Activated T-helper 1 cell treated with anti-CD3 and anti-CD28 coated beads, Interleukin-12 subunit alpha, Interleukin-12 subunit beta, Interleukin-2, Interleukin-4 antibody, amounts not matched to agents 30 ng/mL and 10 ng/mL and 1 ng/mL, durations not matched to agents 14 hours and 24 hours and 36 hours (primary cell): ENCODE measurements at regions of chr1 and their contacts with region 1.

Region 1: DNA sequence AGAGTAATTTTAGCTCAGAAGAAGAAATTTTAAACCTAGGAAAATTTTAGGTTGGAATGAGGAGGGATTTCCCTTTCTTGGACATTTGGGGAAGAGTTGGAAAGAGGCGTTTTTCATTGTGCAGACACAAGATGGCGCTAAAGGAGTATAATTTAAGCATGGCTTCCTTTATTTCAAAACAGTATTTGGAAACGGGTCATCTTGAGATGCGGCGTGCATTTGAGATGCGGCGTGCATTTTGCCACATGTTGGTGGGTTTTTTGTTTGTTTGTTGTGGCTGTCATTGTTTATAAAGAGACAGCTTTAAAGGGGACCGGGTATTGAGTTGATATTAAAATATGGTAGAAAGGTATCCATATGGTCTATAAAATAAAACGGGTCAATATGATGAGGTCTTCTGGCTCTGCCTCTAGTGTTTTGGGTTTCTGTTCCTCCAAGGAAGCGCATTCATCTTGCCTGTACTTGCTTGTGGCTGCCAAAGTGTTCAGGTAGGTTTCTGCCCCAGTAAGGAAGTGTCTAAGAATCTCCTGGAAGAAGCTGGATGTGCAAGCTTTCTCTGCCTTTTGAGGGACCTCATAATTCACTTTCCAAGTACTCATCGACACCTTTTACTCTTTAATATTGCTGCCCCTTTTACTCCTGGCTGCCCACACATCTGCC is 210.3 kb downstream of the SLC35F3 start:
- DNase-seq: no peak
- H3K4me3 Mint-ChIP-seq: peak overlapping the region; percentile 41
- H3K27ac Mint-ChIP-seq: no peak overlapping the region
- H3K4me1 Mint-ChIP-seq: peaks cover 8% of the 10 kb centered on the region
- H3K27me3 Mint-ChIP-seq: peaks cover 27% of the 10 kb centered on the region

Region 2: GRCh38 chr1:232589812-232590743 is 1524.7 kb before region 1 on chr1:
- intact Hi-C with region 1: no loop called
- DNase-seq: no peak
- H3K4me3 Mint-ChIP-seq: no peak overlapping the region
- H3K27ac Mint-ChIP-seq: peak overlapping the region; percentile 27
- H3K4me1 Mint-ChIP-seq: peaks cover 54% of the 10 kb centered on the region
- H3K27me3 Mint-ChIP-seq: no peaks in the 10 kb centered on the region

Region 3: DNA sequence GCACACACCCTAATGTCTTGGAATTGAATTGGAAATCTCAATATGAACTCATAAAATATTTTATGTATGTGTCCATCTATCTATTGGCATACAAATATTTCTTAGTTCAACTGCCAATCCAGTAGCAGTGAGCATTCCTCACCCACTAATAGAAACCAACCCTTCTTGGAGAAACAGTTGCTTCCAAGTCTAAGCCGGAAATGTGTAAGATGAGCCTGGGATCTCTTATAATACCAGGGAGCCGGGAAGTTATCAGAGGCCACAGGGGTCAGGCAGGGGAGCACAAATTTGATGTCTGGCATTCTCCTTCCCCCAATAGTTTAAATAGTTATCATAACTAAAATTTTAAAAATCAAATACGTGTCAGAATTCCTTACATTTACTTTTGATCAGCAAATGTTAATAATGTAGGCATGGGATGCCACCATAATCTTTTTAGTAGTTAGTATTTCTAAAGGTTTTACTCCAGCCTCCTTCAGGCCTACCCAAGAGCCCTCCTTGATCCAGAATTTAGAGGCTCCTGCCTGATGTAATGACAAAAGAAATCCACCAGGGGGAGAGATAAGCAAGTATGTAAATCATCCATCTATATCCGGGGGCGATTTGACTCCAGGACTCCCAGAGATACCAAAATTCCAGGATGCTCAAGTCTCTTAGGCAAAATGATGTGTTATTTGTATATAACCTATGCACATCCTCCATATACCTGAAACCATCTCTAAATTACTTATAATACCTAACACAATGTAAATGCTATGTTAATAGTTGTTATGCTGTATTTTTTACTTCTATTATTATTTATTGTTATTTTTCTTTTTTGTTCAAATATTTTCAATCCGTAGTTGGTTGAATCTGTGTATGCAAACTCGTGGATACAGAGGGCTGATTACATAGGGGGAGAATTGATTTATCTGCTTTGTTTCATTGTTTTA is 39.8 kb after region 1 on chr1:
- intact Hi-C with region 1: loop called (anchors 2 kb)
- DNase-seq: no peak
- H3K4me3 Mint-ChIP-seq: no peak overlapping the region
- H3K27ac Mint-ChIP-seq: no peak overlapping the region
- H3K4me1 Mint-ChIP-seq: no peaks in the 10 kb centered on the region
- H3K27me3 Mint-ChIP-seq: peaks cover 13% of the 10 kb centered on the region

Region 4: DNA sequence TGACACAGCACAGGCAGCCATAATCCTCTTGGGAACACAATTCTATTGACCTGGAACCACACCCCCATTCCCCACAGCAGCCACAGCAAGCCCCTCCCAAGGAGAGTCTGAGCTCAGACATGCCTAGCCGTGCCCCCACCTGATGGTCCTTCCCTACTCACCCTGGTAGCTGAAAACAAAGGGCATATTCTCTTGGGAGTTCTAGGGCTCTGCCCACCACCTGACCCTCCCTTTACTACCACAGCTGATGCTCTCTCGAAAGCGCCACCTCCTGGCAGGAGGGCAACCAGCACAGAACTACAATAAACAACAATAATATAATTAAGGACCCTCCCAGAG is 73.6 kb after region 1 on chr1:
- intact Hi-C with region 1: loop called (anchors 1 kb)
- DNase-seq: no peak
- H3K4me3 Mint-ChIP-seq: no peak overlapping the region
- H3K27ac Mint-ChIP-seq: no peak overlapping the region
- H3K4me1 Mint-ChIP-seq: no peaks in the 10 kb centered on the region
- H3K27me3 Mint-ChIP-seq: peaks cover 37% of the 10 kb centered on the region

Region 5: DNA sequence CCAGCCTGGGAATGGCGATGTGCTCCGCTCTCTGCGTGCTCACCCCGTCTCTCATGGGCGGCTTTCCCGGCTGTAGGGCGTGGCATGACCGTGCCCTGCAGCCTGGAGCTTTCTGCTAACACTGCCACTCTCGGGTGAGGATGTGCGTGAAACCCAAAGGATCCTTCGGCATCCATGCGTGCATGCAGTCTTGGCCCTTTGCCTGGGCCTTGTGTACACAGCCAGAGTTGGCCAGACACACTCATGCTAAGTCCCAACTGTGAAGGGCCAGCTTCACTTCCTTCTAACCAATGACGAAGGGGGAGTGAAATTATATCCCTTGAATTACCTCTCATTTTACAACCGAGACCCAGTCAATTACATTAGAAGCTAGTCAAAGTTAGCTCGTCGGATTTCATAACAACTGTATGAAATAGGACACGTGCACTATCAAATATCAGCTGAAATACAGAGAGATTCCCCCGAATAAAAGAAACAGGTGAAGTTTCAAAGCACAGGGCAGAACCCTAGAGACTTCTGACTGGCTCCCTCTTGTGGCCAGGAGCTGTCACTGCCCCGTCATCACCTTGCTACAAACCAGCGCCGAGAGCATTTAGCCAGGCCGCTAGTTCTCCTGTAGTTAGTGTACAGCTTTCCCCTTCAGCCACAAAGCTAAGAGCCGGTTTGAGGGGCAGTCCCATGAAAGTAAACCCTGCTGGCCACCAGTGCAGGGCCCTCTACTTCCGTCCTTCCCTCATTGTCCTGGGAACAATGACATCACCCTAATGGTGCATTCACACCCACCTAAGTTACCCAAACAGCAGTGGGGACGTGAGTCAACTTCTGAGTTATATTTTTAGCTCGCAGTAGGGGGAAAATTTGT is 195.1 kb after region 1 on chr1:
- intact Hi-C with region 1: loop called (anchors 1 kb)
- DNase-seq: peak; percentile 47
- H3K4me3 Mint-ChIP-seq: no peak overlapping the region
- H3K27ac Mint-ChIP-seq: peak overlapping the region; percentile 5
- H3K4me1 Mint-ChIP-seq: peaks cover 14% of the 10 kb centered on the region
- H3K27me3 Mint-ChIP-seq: peaks cover 1% of the 10 kb centered on the region

Region 6: GRCh38 chr1:234326497-234327366 is 212.0 kb after region 1 on chr1:
- intact Hi-C with region 1: loop called (anchors 1 kb)
- DNase-seq: peak; percentile 53
- H3K4me3 Mint-ChIP-seq: peak overlapping the region; percentile 60
- H3K27ac Mint-ChIP-seq: peak overlapping the region; percentile 33
- H3K4me1 Mint-ChIP-seq: peaks cover 34% of the 10 kb centered on the region
- H3K27me3 Mint-ChIP-seq: peaks cover 25% of the 10 kb centered on the region

Region 7: DNA sequence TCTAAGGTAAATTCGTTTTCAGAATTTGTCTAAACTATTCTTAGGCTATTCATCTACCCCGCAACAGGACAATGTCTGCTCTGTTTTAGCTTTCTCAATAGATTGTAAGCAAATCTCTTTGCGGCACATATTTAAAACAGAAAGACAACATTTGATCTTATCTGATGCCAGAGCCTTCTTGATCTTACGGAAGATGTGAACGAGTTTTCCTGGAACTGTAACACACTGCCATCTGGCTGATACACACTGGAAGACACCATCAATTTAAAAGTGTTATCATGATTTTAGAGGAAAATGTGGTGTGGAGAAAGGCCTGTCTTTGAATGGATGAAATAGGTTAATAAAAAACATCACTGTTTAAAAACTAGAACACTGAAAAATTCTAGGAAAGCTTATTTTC is 294.6 kb after region 1 on chr1:
- intact Hi-C with region 1: loop called (anchors 1 kb)
- DNase-seq: peak; percentile 19
- H3K4me3 Mint-ChIP-seq: peak overlapping the region; percentile 56
- H3K27ac Mint-ChIP-seq: peak overlapping the region; percentile 85
- H3K4me1 Mint-ChIP-seq: peaks cover 40% of the 10 kb centered on the region
- H3K27me3 Mint-ChIP-seq: no peaks in the 10 kb centered on the region

Region 8: DNA sequence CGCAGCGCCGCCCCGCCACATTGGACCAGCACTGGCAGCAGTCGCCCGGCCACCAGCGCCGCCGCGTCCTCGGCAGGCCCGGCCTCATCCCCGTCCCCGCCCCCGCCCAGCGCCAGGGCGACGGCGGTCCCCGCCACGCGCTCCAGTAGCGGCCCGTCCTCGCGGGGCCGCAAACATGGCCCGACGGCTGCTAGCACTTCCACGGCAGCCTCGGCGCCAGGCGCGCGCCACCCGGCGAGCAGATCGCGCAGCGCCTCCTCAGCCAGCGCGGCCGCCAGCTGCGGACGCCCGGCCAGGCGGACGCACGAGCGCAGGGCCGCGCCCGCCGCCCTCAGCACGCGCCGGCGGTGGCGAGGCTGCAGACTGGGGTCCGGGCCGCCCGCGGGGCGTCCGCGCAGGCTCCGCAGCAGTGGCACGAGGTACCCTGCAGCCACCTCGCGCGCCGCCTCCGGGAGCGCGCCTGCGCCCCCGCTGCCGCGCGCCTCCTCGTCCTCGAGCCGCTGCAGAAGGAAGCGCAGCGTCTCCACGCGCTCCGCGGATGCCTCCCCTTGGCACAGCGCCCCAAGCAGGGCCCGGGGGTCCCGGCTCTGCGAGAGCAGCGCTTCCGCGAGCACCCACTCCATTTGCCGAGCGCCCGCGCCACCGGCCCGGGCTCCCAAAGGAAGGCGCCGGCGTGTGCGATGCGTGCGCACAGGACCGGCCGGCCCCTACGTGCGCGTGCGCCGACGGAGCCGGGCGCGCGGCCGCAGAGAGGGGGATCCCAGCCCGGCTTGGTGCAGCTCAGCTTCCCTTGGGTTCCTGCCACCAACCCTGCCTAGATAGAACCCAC is 363.9 kb after region 1 on chr1 and contains the start of gene TARBP1:
- intact Hi-C with region 1: loop called (anchors 1 kb)
- DNase-seq: peak; percentile 76
- H3K4me3 Mint-ChIP-seq: peak within 1 kb of the TSS; percentile 90
- H3K27ac Mint-ChIP-seq: peak within 1 kb of the TSS; percentile 75
- H3K4me1 Mint-ChIP-seq: peaks cover 47% of the 10 kb centered on the region
- H3K27me3 Mint-ChIP-seq: peaks cover 17% of the 10 kb centered on the region
- total RNA-seq, gene TARBP1: 71.7 and 78.9 TPM in 2 replicates